ENCODE measurements at regions of chr5 and their contacts with region 1.

Region 1: DNA sequence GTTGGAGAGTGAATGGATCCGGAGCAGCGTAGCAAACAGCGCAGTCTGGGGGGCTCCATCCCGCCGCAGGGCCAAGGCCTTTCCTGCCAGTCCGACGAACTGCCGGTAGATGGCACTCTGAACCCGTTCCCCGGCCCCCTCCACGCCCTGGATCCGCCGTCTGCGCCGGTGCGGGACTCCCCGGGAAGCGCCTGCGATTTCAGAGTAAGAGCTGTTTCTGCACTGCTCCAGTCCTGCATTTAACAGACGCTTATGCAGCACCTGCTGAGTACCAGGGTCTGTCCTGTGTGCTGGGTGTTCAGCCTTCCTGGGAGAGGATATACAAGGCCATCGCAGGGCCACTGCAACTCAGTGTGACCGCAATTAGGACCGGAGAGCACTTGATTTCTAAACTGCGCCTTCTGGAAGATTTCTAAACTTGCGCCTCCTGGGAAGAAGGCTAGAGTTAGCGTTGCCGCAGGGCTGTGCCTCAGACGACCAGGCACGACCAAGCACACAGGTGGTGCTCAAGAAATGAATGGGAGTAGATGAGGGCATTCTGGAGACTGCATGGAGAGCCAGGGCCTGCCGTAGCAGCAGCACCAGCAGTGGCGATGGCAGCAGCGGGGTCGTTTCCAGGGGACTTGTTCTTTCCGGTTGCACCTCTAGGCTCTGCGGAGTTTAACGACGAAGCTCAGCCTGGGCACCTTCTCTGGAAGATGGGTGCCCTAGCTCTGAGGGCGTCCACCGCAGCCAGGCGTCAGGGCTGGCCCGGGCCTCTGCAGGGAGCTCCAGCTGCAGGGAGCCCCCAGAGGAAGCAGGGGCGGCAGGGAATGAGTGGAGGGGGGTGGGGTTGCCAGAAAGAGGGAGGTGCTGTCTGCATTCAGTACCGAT is 14.3 kb upstream of the TIFAB start:
- DNase-seq: no peak
- ATAC-seq: peak; percentile 92
- H3K4me3 ChIP-seq: no peak overlapping the region
- H3K27ac ChIP-seq: no peak overlapping the region
- H3K4me1 ChIP-seq: no peaks in the 10 kb centered on the region; the same call in 1 of the 2 replicates
- H3K27me3 ChIP-seq: peaks cover 0 to 3% of the 10 kb centered on the region in 2 experiments; a peak in 3 of 4 replicates
- CTCF ChIP-seq: peak; percentile 76 to 89 (median 82)
- EP300 ChIP-seq: no peak
- POLR2A ChIP-seq: no peak
- RAD21 ChIP-seq: peak; percentile 79

Region 2: GRCh38 chr5:135426102-135427082 is 40.0 kb before region 1 on chr5:
- CTCF ChIA-PET with region 1: interaction called, 10 read pairs
- POLR2A ChIA-PET with region 1: no interaction called
- RAD21 ChIA-PET with region 1: no interaction called
- SMC1A ChIA-PET with region 1: interaction called, 4 read pairs
- in situ Hi-C with region 1: no loop called
- intact Hi-C with region 1: no loop called
- DNase-seq: peak; percentile 12
- ATAC-seq: peak; percentile 98
- H3K4me3 ChIP-seq: no peak overlapping the region
- H3K27ac ChIP-seq: no peak overlapping the region
- H3K4me1 ChIP-seq: no peaks in the 10 kb centered on the region
- H3K27me3 ChIP-seq: peaks cover 0 to 3% of the 10 kb centered on the region in 2 experiments; a peak in 1 of 4 replicates
- CTCF ChIP-seq: peak; percentile 70 to 77 (median 71)
- EP300 ChIP-seq: no peak
- POLR2A ChIP-seq: no peak
- RAD21 ChIP-seq: peak; percentile 75

Region 3: DNA sequence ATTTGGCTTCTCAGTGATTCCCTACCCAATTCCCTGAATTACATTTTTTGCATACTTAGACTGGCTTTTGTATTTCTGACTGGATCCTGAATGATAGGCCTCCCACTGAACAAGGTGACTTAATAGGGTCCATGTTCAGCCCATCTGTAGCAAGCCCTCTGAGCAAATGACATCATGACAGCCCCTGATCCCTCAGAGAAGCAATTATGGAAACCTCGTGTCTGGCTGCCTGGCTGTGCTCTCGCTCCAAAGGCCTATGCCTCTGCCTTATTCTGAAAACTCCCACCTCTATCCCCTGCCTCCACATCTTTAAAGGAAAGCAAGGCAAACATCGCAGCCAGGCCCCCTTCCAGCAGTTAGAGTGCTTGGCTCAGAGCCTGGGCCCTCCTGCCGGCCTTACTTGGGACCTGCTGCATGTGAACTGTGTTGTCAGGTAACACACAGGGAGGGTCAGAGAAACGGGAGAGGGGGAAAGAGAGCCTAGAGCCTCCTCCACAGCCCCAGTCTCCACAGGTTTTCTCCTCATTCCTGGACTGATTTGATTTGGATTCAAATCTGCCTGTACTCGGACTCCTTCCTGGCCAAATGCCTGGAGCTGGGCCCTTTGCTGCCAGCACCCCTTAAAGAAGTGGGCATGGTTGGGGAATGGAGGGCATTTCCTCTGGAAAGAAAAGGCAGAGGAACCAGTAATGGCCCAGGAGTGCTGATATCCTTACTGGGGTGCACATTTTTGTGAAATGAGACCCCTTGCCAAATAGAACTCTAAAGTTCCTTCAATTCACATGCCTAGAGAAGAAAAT is 23.1 kb before region 1 on chr5:
- CTCF ChIA-PET with region 1: interaction called, 22 read pairs
- POLR2A ChIA-PET with region 1: interaction called, 7 read pairs
- RAD21 ChIA-PET with region 1: no interaction called
- SMC1A ChIA-PET with region 1: interaction called, 3 read pairs
- in situ Hi-C with region 1: no loop called
- intact Hi-C with region 1: no loop called
- DNase-seq: no peak
- ATAC-seq: no peak
- H3K4me3 ChIP-seq: no peak overlapping the region
- H3K27ac ChIP-seq: no peak overlapping the region
- H3K4me1 ChIP-seq: peaks cover 17% of the 10 kb centered on the region
- H3K27me3 ChIP-seq: 0 out of 4 replicates have a peak, but pooled peaks cover 0 to 1% of the 10 kb centered on the region in 2 experiments
- CTCF ChIP-seq: no peak
- EP300 ChIP-seq: no peak
- POLR2A ChIP-seq: no peak
- RAD21 ChIP-seq: no peak

Region 4: DNA sequence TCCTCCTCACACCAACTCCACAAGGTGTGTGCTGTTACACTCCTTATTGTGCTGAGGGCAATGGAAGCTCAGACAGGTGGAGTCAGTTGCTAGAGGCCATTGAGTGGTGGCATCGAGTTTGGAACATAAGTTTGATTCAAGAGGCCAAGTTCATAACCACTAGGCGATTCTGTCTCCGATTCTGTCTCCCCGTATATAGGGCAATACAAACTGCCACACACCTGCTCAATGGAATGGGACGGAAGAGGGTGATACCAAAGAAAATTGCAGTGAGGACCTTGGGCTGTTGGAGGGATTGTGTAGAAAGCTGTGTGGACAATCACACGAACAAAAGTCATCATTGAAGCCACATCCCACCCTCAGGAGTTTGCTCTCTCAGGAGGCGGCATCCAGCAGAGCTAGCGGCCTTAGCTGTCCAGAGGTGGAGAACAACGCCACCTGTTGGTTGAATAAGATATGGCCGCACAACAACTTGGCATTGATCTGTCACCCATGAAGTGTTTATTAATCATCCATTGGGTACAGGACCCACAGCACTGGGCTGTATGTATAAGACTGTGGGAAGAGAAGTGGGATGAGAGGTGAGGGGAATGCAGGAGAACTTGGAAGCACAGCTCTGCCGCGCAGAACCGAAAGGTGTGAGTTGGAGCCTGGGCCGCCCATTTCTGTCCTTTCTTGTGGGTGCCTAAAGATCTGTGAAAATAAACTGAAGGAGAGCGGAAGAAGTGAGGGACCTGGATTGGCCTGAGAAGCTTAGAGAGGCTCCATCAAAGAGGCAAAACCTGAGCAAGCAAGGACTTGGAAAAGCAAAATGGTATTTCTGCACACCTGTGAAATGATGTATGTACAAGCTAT is 85.4 kb after region 1 on chr5:
- CTCF ChIA-PET with region 1: interaction called, 363 read pairs
- POLR2A ChIA-PET with region 1: interaction called, 3 read pairs
- RAD21 ChIA-PET with region 1: interaction called, 47 read pairs
- SMC1A ChIA-PET with region 1: interaction called, 63 read pairs
- in situ Hi-C with region 1: loop called (anchors 5 kb)
- intact Hi-C with region 1: loop called (anchors 1 kb)
- DNase-seq: peak; percentile 12
- ATAC-seq: peak; percentile 97
- H3K4me3 ChIP-seq: no peak overlapping the region
- H3K27ac ChIP-seq: no peak overlapping the region
- H3K4me1 ChIP-seq: no peaks in the 10 kb centered on the region
- H3K27me3 ChIP-seq: no peaks in the 10 kb centered on the region; a peak in 2 of 4 replicates
- CTCF ChIP-seq: peak; percentile 71 to 82 (median 80); a peak in 5 of 6 replicates
- EP300 ChIP-seq: no peak
- POLR2A ChIP-seq: no peak
- RAD21 ChIP-seq: peak; percentile 71

Region 5: GRCh38 chr5:135560858-135561257 is 94.4 kb after region 1 on chr5:
- CTCF ChIA-PET with region 1: interaction called, 363 read pairs
- POLR2A ChIA-PET with region 1: no interaction called
- RAD21 ChIA-PET with region 1: interaction called, 12 read pairs
- SMC1A ChIA-PET with region 1: interaction called, 18 read pairs
- in situ Hi-C with region 1: no loop called
- intact Hi-C with region 1: loop called (anchors 2 kb)
- DNase-seq: peak; percentile 21
- ATAC-seq: peak; percentile 99
- H3K4me3 ChIP-seq: no peak overlapping the region
- H3K27ac ChIP-seq: no peak overlapping the region
- H3K4me1 ChIP-seq: no peaks in the 10 kb centered on the region
- H3K27me3 ChIP-seq: peaks cover 3% of the 10 kb centered on the region in 2 experiments; a peak in 3 of 4 replicates
- CTCF ChIP-seq: peak; percentile 78 to 87 (median 85)
- EP300 ChIP-seq: no peak
- POLR2A ChIP-seq: no peak
- RAD21 ChIP-seq: peak; percentile 70

Region 6: GRCh38 chr5:135565725-135566421 is 99.5 kb after region 1 on chr5:
- CTCF ChIA-PET with region 1: interaction called, 203 read pairs
- POLR2A ChIA-PET with region 1: no interaction called
- RAD21 ChIA-PET with region 1: interaction called, 12 read pairs
- SMC1A ChIA-PET with region 1: interaction called, 18 read pairs
- in situ Hi-C with region 1: no loop called
- intact Hi-C with region 1: loop called (anchors 2 kb)
- DNase-seq: no peak
- ATAC-seq: peak; percentile 92
- H3K4me3 ChIP-seq: no peak overlapping the region
- H3K27ac ChIP-seq: no peak overlapping the region
- H3K4me1 ChIP-seq: no peaks in the 10 kb centered on the region; the same call in 1 of the 2 replicates
- H3K27me3 ChIP-seq: peaks cover 0 to 3% of the 10 kb centered on the region in 2 experiments; a peak in 3 of 4 replicates
- CTCF ChIP-seq: peak; percentile 83 to 97 (median 94)
- EP300 ChIP-seq: no peak
- POLR2A ChIP-seq: no peak
- RAD21 ChIP-seq: peak; percentile 50; the same call in 1 of the 2 replicates

Region 7: DNA sequence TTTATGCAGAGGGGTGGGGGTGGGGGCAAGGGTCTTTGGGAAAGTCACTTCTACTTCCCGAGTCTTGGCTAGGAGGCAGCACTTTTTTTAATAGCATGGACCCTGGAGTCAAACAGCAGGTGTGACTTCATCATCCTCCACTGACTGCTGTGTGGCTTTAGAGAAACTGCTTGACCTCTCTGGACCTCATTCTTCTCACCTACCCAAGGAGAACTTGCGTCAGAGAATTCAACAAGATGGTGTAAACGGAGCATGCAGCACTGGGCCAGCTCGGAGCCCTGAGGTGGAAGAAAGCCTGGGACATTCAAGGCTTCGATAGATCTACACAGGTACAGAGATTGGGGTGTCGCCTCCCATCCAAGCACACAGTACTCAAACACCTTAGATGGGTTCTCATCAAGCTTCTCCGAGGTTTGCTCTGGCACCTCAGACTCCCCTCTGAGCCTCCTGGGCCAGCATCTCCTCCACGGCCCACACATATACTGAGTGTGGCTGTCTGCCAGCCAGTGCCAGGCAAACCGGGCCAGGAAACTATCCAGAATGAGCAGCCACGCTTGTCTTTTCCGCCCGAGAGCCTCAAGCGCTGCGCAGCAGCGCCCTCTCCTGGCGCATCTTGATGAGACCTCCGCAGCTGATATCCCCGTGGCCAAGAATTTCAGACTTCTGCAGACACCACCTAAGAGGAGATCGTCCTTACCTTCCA is 363.4 kb after region 1 on chr5:
- CTCF ChIA-PET with region 1: interaction called, 3 read pairs
- POLR2A ChIA-PET with region 1: no interaction called
- RAD21 ChIA-PET with region 1: no interaction called
- SMC1A ChIA-PET with region 1: no interaction called
- in situ Hi-C with region 1: loop called (anchors 5 kb)
- intact Hi-C with region 1: loop called (anchors 1 kb)
- DNase-seq: no peak
- ATAC-seq: peak; percentile 75
- H3K4me3 ChIP-seq: no peak overlapping the region
- H3K27ac ChIP-seq: no peak overlapping the region
- H3K4me1 ChIP-seq: no peaks in the 10 kb centered on the region
- H3K27me3 ChIP-seq: peaks cover 0 to 8% of the 10 kb centered on the region in 2 experiments; a peak in 2 of 4 replicates
- CTCF ChIP-seq: peak; percentile 62 to 76 (median 75)
- EP300 ChIP-seq: no peak
- POLR2A ChIP-seq: no peak
- RAD21 ChIP-seq: peak; percentile 55

Region 8: DNA sequence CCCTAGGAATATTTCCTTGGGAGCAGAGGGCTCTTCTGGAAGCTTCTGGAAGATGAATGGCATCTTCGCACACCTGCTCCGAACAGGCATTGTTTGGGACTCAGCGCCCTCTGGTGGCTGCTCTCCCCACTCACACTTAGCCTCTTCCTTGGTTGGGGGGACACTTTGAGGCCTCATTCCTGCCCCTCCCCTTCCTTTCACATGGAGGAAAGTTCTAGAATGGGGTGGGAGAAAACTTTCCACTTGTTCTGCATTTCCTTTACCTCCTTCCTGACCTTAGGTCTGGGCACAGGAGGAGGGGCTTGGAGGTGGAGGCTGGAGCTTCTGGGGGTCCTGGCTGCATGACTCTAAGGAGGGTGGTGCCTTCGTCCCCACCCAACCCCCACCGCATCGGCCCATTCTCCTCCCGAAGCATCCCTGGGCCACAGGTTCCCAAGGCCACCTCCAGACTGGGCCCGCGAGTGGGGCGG is 745.9 kb after region 1 on chr5:
- CTCF ChIA-PET with region 1: no interaction called
- POLR2A ChIA-PET with region 1: no interaction called
- RAD21 ChIA-PET with region 1: no interaction called
- SMC1A ChIA-PET with region 1: no interaction called
- in situ Hi-C with region 1: no loop called
- intact Hi-C with region 1: no loop called
- DNase-seq: no peak
- ATAC-seq: peak; percentile 85
- H3K4me3 ChIP-seq: no peak overlapping the region
- H3K27ac ChIP-seq: no peak overlapping the region
- H3K4me1 ChIP-seq: no peaks in the 10 kb centered on the region
- H3K27me3 ChIP-seq: peaks cover 0 to 3% of the 10 kb centered on the region in 2 experiments; a peak in 2 of 4 replicates
- CTCF ChIP-seq: peak; percentile 81 to 87 (median 81)
- EP300 ChIP-seq: no peak
- POLR2A ChIP-seq: no peak
- RAD21 ChIP-seq: peak; percentile 79